IMR-90 (cell line): ENCODE measurements at regions of chr10 and their contacts with region 1.

Region 1: GRCh38 chr10:133329491-133330202 is 7.0 kb downstream of the CALY start:
- DNase-seq: peak; percentile 84
- ATAC-seq: peak; percentile 86
- H3K4me3 ChIP-seq: peak overlapping the region; percentile 19; the same call in 1 of the 2 replicates
- H3K27ac ChIP-seq: no peak overlapping the region
- H3K4me1 ChIP-seq: peaks cover 18% of the 10 kb centered on the region
- H3K27me3 ChIP-seq: peaks cover 38% of the 10 kb centered on the region
- CTCF ChIP-seq: peak; percentile 96
- POLR2A ChIP-seq: no peak
- RAD21 ChIP-seq: peak; percentile 81

Region 2: DNA sequence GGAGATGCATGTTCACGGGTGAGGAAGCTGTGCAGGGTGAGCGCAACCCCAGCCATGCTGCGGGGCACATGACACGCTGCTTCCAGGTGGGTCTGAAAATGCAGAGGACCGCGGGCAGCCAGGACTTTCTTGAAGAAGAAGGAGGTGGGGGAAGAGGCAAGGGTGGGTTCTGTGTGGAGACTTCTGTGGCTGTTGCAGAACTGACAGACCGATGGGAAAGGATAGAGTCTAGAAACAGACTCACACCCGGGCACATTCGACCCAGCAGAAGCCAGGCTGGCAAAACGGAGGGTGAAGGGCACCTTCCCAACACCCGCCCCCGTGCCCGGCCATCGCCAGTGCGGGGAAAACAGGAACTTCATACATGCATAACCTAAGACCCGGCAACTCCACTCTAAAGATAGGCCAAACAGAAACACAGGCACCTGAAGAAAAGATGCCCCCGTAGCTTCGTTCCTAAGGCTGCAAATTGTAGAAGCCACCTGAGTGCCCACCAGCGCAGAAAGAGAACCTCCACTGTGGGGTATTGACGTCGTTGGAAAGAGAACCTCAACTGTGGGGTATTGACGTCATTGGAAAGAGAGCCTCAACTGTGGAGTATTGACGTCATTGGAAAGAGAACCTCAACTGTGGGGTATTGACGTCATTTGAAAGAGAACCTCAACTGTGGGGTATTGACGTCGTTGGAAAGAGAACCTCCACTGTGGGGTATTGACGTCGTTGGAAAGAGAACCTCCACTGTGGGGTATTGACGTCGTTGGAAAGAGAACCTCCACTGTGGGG is 174.5 kb before region 1 on chr10:
- CTCF ChIA-PET with region 1: no interaction called
- POLR2A ChIA-PET with region 1: no interaction called
- dilution Hi-C with region 1: no loop called
- in situ Hi-C with region 1: no loop called
- intact Hi-C with region 1: no loop called
- DNase-seq: no peak
- ATAC-seq: no peak
- H3K4me3 ChIP-seq: no peak overlapping the region
- H3K27ac ChIP-seq: no peak overlapping the region
- H3K4me1 ChIP-seq: peaks cover 13% of the 10 kb centered on the region
- H3K27me3 ChIP-seq: peaks cover 9% of the 10 kb centered on the region
- CTCF ChIP-seq: no peak
- POLR2A ChIP-seq: no peak
- RAD21 ChIP-seq: no peak

Region 3: DNA sequence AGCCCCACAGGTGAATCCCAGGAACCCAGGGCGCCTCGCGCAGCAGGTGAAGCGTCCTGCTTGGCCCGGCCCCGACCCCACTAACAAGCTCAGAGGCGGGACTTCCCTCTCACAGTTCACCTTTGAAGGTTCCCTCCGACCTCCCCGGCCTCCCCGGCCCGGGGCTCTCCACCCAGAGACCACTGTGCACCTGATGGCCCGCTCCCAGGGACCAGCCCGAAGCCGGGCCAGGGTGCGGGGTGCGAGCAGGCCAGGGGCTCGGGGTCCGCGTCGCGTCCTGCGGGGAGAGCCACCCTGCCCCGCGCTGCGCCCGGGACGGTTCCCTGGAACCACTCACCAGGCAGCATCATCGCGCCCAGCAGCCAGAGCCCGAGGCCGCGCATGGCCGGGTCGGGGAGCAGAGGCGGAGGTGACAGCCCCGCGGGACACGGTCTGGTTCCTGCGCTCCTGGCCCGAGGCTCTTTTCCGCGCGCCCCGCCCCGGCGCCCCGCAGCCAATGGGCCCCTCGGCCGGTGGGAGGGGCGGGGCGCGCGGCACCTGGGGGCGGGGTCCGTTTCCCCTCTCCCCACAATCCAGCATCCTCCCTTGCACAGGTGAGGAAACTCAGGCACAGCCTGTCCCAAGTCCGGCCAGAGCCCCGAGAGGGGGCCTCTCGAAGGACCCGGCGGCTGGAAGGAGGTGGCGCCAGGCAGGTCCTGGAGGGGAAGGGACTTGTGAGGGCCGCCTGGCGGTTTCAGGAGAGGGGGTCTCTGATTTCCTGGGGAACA is 53.0 kb before region 1 on chr10 and contains the start of gene ADAM8:
- CTCF ChIA-PET with region 1: no interaction called
- POLR2A ChIA-PET with region 1: no interaction called
- dilution Hi-C with region 1: no loop called
- in situ Hi-C with region 1: no loop called
- intact Hi-C with region 1: no loop called
- DNase-seq: no peak
- ATAC-seq: peak; percentile 52
- H3K4me3 ChIP-seq: no peak within 1 kb of the TSS
- H3K27ac ChIP-seq: no peak within 1 kb of the TSS
- H3K4me1 ChIP-seq: peaks cover 10% of the 10 kb centered on the region
- H3K27me3 ChIP-seq: peaks cover 9% of the 10 kb centered on the region
- CTCF ChIP-seq: no peak
- POLR2A ChIP-seq: no peak
- RAD21 ChIP-seq: no peak
- total RNA-seq, gene ADAM8: under 0.01 and 0.28 TPM in 2 replicates

Region 4: DNA sequence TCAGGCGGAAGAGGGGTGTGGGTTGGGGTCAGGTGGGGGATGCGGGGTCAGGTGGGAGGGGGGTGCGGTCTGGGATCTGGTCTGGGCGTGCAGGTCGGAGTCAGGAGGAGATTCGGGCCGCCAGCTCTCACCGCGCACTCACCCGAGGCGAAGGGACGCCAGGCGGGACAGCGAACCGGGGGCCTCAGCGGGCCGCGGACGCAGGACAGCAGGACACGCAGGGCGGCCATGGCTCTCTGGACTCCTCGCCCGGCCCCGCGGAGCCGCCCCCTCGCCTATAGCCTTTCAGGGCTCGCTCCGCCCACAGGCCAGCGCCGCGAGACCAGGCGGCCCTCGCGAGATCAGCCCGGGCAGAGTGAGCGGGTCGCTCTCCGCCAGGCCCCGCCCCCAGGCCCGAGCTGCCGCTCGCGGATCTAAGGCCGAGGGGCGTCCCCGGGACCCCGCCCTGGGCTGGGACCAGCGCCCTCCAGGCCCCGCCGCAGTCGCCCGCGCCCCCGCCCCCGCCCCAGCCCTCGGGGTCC is 43.5 kb after region 1 on chr10 and contains the start of gene ECHS1:
- CTCF ChIA-PET with region 1: interaction called, 4 read pairs
- POLR2A ChIA-PET with region 1: no interaction called
- dilution Hi-C with region 1: no loop called
- in situ Hi-C with region 1: no loop called
- intact Hi-C with region 1: loop called (anchors 10 kb)
- DNase-seq: peak; percentile 81
- ATAC-seq: peak; percentile 99
- H3K4me3 ChIP-seq: peak within 1 kb of the TSS; percentile 97
- H3K27ac ChIP-seq: peak within 1 kb of the TSS; percentile 99
- H3K4me1 ChIP-seq: peaks cover 7% of the 10 kb centered on the region
- H3K27me3 ChIP-seq: no peaks in the 10 kb centered on the region
- CTCF ChIP-seq: no peak
- POLR2A ChIP-seq: peak; percentile 60; the same call in 1 of the 2 replicates
- RAD21 ChIP-seq: no peak
- total RNA-seq, gene ECHS1: 60.8 and 71.1 TPM in 2 replicates

Region 5: GRCh38 chr10:133394064-133394663 is 64.5 kb after region 1 on chr10 and contains the start of gene MTG1:
- CTCF ChIA-PET with region 1: no interaction called
- POLR2A ChIA-PET with region 1: no interaction called
- dilution Hi-C with region 1: no loop called
- in situ Hi-C with region 1: no loop called
- intact Hi-C with region 1: no loop called
- DNase-seq: peak; percentile 87
- ATAC-seq: peak; percentile 97
- H3K4me3 ChIP-seq: peak within 1 kb of the TSS; percentile 97
- H3K27ac ChIP-seq: peak within 1 kb of the TSS; percentile 81
- H3K4me1 ChIP-seq: peaks cover 4% of the 10 kb centered on the region; the same call in 1 of the 2 replicates
- H3K27me3 ChIP-seq: no peaks in the 10 kb centered on the region
- CTCF ChIP-seq: peak; percentile 17; the same call in 1 of the 2 replicates
- POLR2A ChIP-seq: peak; percentile 85
- RAD21 ChIP-seq: no peak
- total RNA-seq, gene MTG1: 38.0 and 38.5 TPM in 2 replicates

Region 6: GRCh38 chr10:133489816-133490588 is 160.4 kb after region 1 on chr10:
- CTCF ChIA-PET with region 1: interaction called, 3 read pairs
- POLR2A ChIA-PET with region 1: no interaction called
- dilution Hi-C with region 1: no loop called
- in situ Hi-C with region 1: loop called (anchors 10 kb)
- intact Hi-C with region 1: no loop called
- DNase-seq: no peak
- ATAC-seq: no peak
- H3K4me3 ChIP-seq: no peak overlapping the region
- H3K27ac ChIP-seq: no peak overlapping the region
- H3K4me1 ChIP-seq: no peaks in the 10 kb centered on the region
- H3K27me3 ChIP-seq: no peaks in the 10 kb centered on the region
- CTCF ChIP-seq: no peak
- POLR2A ChIP-seq: no peak
- RAD21 ChIP-seq: no peak

Region 7: GRCh38 chr10:133520155-133520738 is 190.6 kb after region 1 on chr10:
- CTCF ChIA-PET with region 1: no interaction called
- POLR2A ChIA-PET with region 1: no interaction called
- dilution Hi-C with region 1: no loop called
- in situ Hi-C with region 1: no loop called
- intact Hi-C with region 1: loop called (anchors 10 kb)
- DNase-seq: peak; percentile 30
- ATAC-seq: peak; percentile 98
- H3K4me3 ChIP-seq: peak overlapping the region; percentile 53
- H3K27ac ChIP-seq: peak overlapping the region; percentile 53
- H3K4me1 ChIP-seq: no peaks in the 10 kb centered on the region
- H3K27me3 ChIP-seq: no peaks in the 10 kb centered on the region
- CTCF ChIP-seq: peak; percentile 68
- POLR2A ChIP-seq: no peak
- RAD21 ChIP-seq: peak; percentile 38